Right ventricle myocardium inferior (tissue), 1 donor: ENCODE measurements at regions of chr10 and their contacts with region 1.

Region 1: GRCh38 chr10:88835096-88835909 is 16.3 kb downstream of the ANKRD22 start:
- DNase-seq: peak; percentile 83
- ATAC-seq: peak; percentile 94

Region 2: GRCh38 chr10:88880282-88881076 is 45.2 kb after region 1 on chr10:
- intact Hi-C with region 1: loop called (anchors 5 kb)
- DNase-seq: peak; percentile 95
- ATAC-seq: peak; percentile 96

Region 3: DNA sequence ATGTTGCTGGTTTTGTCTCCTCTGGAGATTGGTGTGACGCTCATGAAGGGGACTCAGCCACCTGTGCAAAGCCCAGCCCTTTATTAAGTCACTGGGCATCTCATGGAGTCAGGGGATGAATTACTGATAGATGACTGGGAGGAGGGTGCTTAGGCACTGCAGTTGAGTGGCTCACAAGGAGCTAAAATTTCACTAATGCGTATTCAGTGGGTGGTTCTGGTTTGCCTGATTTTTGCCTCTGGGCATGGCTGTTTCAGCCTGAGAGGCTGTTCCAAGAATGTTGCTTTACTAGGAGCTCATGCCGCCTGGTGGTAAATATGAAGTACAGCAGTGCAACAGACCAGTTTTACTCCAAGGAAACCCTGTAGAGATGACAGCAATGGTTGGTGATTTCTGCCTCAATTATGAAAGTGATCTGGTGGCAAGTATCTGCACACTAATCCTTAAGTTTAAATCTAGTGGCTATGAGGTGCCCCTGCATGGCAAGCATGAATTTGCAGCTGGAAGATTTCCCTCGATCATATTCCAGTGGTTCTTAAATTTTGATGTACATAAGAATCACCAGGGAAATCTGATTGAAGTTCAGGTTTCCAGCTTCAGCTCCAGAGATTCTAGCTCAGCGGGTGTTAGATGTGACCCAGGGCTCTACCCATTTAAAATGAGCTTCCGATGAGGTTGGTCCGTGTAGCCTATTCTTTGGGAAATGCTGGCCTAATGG is 97.4 kb after region 1 on chr10:
- intact Hi-C with region 1: loop called (anchors 1 kb)
- DNase-seq: no peak
- ATAC-seq: peak; percentile 74

Region 4: GRCh38 chr10:89217057-89217990 is 382.0 kb after region 1 on chr10:
- intact Hi-C with region 1: loop called (anchors 5 kb)
- DNase-seq: no peak
- ATAC-seq: no peak